GM23248 (cell line): ENCODE measurements at regions of chr4 and their contacts with region 1.

Region 1: GRCh38 chr4:165464813-165465381 is 86.1 kb downstream of the CPE start:
- DNase-seq: peak; percentile 72
- H3K4me3 ChIP-seq: no peak overlapping the region; the same call in 1 of the 2 replicates
- H3K27ac ChIP-seq: no peak overlapping the region
- H3K4me1 ChIP-seq: peaks cover 21% of the 10 kb centered on the region
- H3K27me3 ChIP-seq: no peaks in the 10 kb centered on the region

Region 2: DNA sequence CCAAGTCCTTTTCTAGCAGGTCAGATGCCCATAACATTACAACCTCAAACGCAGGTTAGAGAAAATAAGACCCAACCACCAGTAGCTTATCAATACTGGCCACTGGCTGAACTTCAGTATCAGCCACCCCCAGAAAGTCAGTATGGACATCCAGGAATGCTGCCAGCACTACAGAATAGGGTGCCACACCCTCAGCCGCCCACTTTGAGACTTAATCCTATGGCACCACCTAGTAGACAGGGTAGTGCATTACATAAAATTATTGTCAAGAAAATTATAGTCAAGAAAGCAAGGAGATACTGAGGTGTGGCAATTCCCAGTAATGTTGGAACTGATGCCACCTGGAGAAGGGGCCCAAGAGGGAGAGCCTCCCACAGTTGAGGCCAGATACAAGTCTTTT is 467.6 kb before region 1 on chr4:
- in situ Hi-C with region 1: no loop called
- DNase-seq: peak; percentile 66
- H3K4me3 ChIP-seq: no peak overlapping the region
- H3K27ac ChIP-seq: no peak overlapping the region
- H3K4me1 ChIP-seq: no peaks in the 10 kb centered on the region
- H3K27me3 ChIP-seq: no peaks in the 10 kb centered on the region; the same call in 1 of the 2 replicates

Region 3: GRCh38 chr4:165136529-165136928 is 328.4 kb before region 1 on chr4:
- in situ Hi-C with region 1: loop called (anchors 5 kb)
- DNase-seq: no peak
- H3K4me3 ChIP-seq: no peak overlapping the region
- H3K27ac ChIP-seq: no peak overlapping the region
- H3K4me1 ChIP-seq: no peaks in the 10 kb centered on the region; the same call in 1 of the 2 replicates
- H3K27me3 ChIP-seq: no peaks in the 10 kb centered on the region

Region 4: DNA sequence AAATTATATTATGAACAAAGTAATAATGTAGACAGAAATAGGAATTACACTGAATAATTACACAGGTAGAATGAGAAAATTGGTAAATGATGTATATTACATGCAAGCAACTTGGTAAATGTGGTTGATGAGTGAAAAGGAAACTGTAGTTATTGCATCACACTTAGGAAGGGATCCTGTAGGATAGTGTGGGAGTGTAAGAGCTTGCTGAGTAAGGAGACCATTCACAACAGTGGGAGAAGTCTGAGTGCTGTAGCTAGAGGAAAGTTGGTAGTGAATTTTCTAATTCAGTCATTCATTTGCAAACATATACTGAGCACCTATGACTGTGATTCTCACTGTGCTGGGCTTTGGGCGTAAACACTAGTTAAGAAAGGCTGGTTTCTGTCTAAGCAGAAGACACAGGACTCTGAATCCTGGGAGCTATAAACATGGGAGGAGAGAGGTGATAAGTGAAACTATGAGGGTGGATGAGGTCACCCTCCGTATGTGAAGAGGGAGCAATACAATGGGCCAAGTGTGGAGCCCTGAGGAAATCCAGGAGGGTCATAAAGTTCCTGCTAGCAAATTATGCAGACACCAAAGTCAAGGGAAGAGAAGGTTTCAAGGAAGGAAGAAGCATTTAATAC is 100.3 kb before region 1 on chr4:
- in situ Hi-C with region 1: loop called (anchors 10 kb)
- DNase-seq: peak; percentile 70
- H3K4me3 ChIP-seq: no peak overlapping the region
- H3K27ac ChIP-seq: peak overlapping the region; percentile 22; the same call in 1 of the 2 replicates
- H3K4me1 ChIP-seq: peaks cover 27% of the 10 kb centered on the region
- H3K27me3 ChIP-seq: no peaks in the 10 kb centered on the region

Region 5: GRCh38 chr4:166198041-166198440 is 733.1 kb after region 1 on chr4:
- in situ Hi-C with region 1: no loop called
- DNase-seq: no peak
- H3K4me3 ChIP-seq: no peak overlapping the region
- H3K27ac ChIP-seq: no peak overlapping the region
- H3K4me1 ChIP-seq: no peaks in the 10 kb centered on the region
- H3K27me3 ChIP-seq: no peaks in the 10 kb centered on the region